Motor neuron (in vitro differentiated cells): ENCODE measurements at regions of chr5 and their contacts with region 1.

Region 1: GRCh38 chr5:149828161-149828884 is 98.2 kb downstream of the PPARGC1B start:
- ATAC-seq: peak; percentile 63 to 96 (median 82)
- H3K4me3 ChIP-seq: no peak overlapping the region
- H3K27ac ChIP-seq: no peak overlapping the region
- H3K4me1 ChIP-seq: peaks cover 6 to 16% of the 10 kb centered on the region in 2 donors

Region 2: GRCh38 chr5:149254506-149254905 is 573.8 kb before region 1 on chr5:
- in situ Hi-C with region 1: no loop called
- ATAC-seq: peak in 1 of 8 experiments; percentile 44
- H3K4me3 ChIP-seq: no peak overlapping the region
- H3K27ac ChIP-seq: no peak overlapping the region
- H3K4me1 ChIP-seq: no peaks in the 10 kb centered on the region

Region 3: DNA sequence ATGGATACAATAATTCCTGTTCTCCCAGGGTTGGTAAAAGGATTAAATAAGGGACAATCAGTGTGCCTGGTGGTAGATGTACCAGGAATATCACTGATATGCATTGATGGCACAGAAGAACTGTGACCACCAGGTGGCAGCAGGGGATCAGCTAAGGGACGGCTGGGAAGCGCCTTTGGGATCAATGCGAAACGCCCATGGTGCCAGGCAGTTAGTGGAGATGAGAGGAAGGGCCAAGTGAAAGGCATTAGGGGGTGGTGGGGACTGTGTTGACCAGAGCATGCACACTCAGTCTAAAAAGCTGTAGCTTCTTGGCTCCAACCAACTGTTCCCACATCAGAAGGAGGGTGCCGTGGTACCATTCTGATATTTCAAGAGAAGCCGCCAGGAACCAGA is 191.5 kb before region 1 on chr5:
- in situ Hi-C with region 1: loop called in 7 of 9 experiments (anchors 5 to 25 kb)
- ATAC-seq: peak; percentile 75 to 96 (median 88)
- H3K4me3 ChIP-seq: no peak overlapping the region
- H3K27ac ChIP-seq: no peak overlapping the region
- H3K4me1 ChIP-seq: peaks cover 3 to 14% of the 10 kb centered on the region in 2 donors

Region 4: DNA sequence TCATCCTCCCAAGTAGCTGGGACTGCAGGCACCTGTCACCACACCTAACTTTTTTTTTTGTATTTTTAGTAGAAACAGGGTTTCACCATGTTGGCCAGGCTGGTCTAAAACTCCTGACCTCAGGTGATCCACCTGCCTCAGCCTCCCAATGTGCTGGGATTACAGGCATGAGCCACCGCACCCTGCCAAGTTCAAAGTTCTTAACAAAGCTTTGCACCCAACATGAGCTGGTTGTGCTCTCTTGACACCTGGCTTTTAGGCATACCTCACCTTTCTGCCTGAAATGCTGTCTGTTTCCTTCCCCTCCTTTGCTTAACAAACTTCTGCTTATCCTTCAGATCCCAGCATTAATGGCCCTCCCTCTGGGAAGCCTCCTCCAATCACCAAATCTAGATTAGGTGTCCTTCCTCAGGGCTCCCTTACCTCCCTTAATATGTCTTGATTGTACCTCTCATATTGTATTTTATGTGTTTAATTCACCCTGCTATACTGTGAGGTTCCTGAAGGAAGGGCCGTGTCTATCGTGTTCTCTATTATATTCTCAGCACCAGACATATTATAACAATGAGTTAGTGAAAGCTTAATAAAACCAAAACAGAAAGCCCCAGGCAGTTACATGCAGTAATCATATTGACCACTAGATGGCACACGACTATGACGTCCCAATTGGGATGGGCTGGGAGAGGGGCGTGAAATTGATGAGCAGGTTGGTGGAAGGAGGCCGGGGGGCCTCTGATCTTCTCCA is 161.1 kb before region 1 on chr5:
- in situ Hi-C with region 1: loop called in 2 of 9 experiments (anchors 10 kb)
- ATAC-seq: peak in 3 of 8 experiments; percentile 42 to 57 (median 54)
- H3K4me3 ChIP-seq: no peak overlapping the region
- H3K27ac ChIP-seq: no peak overlapping the region
- H3K4me1 ChIP-seq: no peaks in the 10 kb centered on the region

Region 5: GRCh38 chr5:149990518-149991376 is 162.4 kb after region 1 on chr5:
- in situ Hi-C with region 1: loop called in 7 of 9 experiments (anchors 10 to 25 kb)
- ATAC-seq: peak; percentile 74 to 90 (median 78)
- H3K4me3 ChIP-seq: no peak overlapping the region
- H3K27ac ChIP-seq: no peak overlapping the region
- H3K4me1 ChIP-seq: peaks cover 0 to 10% of the 10 kb centered on the region in 2 donors

Region 6: DNA sequence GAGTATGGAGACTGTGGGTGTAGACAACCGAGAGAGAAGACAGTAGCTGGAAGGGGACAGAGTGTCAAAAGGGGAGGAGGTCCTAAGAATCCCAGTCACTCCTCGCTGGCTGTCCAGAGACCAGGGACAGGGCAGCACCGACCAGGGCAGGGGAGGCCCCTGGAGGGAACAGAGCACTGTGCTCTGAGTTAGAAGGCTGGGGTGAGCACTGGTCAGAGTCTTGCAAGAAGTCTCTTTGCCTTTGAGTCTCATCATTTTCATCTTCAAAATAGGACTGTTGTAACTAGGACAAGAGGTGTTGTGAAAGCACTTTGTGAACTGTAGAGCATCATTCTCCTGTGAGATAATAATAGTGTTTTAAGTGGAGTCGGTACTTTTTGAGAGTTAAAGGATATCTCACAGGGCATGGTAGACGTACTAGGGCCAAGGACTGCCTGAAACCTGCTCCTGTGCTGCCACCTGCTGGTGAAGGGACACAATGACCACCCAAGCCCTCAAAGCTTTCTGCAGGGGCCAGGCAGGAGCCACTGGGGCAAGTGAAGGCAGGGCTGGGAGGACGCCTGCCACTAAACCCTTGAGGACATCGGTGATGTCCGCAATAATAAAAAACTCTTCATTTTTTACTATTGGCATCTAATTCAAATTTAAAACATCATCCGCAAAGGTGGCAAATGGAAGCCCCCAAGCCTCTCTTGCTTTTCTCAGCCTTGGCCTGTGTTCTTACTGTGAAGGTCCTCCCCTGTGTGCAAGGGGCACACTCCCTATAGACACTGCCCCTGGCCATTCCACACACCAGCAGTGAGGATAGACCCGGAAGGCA is 389.8 kb after region 1 on chr5:
- in situ Hi-C with region 1: loop called in 1 of 9 experiments (anchors 25 kb)
- ATAC-seq: peak; percentile 40 to 96 (median 94)
- H3K4me3 ChIP-seq: no peak overlapping the region
- H3K27ac ChIP-seq: no peak overlapping the region
- H3K4me1 ChIP-seq: no peaks in the 10 kb centered on the region